ENCODE measurements at regions of chr2 and their contacts with region 1.

Region 1: DNA sequence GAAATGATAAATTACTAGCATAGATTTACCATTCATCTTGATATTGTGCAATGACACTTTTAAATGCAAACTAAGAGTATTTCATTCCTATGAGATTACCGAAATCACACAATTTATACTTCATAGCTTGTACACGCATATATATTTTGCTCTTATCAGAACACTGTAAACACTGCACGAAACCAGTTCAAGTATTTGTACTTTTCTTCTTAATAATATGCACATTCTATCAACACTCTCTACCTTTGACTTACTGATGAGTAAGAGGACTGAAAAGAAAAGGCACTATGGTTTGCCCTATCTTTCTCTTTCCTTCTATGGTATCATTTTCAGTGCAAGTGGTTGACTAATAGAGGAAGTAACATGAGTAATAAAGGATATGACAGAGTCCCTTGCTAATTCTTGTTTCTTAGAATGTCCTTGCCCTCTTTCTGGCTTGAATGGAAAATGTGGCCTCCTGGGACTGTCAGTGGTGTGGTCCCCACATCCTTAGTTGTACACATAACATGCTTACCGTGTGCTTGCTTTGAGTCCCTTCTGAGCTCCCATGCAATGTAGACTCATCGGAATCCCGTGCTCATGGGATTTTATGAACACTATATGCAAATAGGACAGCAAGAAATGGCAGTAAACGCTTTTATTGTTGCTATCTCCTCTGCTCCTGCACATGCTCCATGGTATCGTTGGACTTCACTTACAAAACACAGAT is 363.5 kb upstream of the TNP1 start:
- DNase-seq: peak; percentile 56
- H3K4me3 Mint-ChIP-seq: no peak overlapping the region
- H3K27ac Mint-ChIP-seq: peak overlapping the region; percentile 86
- H3K4me1 Mint-ChIP-seq: peaks cover 42% of the 10 kb centered on the region
- H3K27me3 Mint-ChIP-seq: no peaks in the 10 kb centered on the region
- CTCF ChIP-seq: no peak

Region 2: GRCh38 chr2:217086038-217086522 is 137.3 kb before region 1 on chr2:
- CTCF ChIA-PET with region 1: no interaction called
- intact Hi-C with region 1: no loop called
- DNase-seq: no peak
- H3K4me3 Mint-ChIP-seq: no peak overlapping the region
- H3K27ac Mint-ChIP-seq: no peak overlapping the region
- H3K4me1 Mint-ChIP-seq: no peaks in the 10 kb centered on the region
- H3K27me3 Mint-ChIP-seq: no peaks in the 10 kb centered on the region
- CTCF ChIP-seq: no peak

Region 3: GRCh38 chr2:217105733-217106649 is 117.4 kb before region 1 on chr2:
- CTCF ChIA-PET with region 1: no interaction called
- intact Hi-C with region 1: loop called (anchors 5 kb)
- DNase-seq: peak; percentile 66
- H3K4me3 Mint-ChIP-seq: no peak overlapping the region
- H3K27ac Mint-ChIP-seq: peak overlapping the region; percentile 90
- H3K4me1 Mint-ChIP-seq: peaks cover 65% of the 10 kb centered on the region
- H3K27me3 Mint-ChIP-seq: no peaks in the 10 kb centered on the region
- CTCF ChIP-seq: no peak

Region 4: GRCh38 chr2:217186668-217187159 is 36.7 kb before region 1 on chr2:
- CTCF ChIA-PET with region 1: no interaction called
- intact Hi-C with region 1: no loop called
- DNase-seq: no peak
- H3K4me3 Mint-ChIP-seq: no peak overlapping the region
- H3K27ac Mint-ChIP-seq: no peak overlapping the region
- H3K4me1 Mint-ChIP-seq: no peaks in the 10 kb centered on the region
- H3K27me3 Mint-ChIP-seq: no peaks in the 10 kb centered on the region
- CTCF ChIP-seq: no peak

Region 5: GRCh38 chr2:217261452-217261851 is 38.1 kb after region 1 on chr2:
- CTCF ChIA-PET with region 1: no interaction called
- intact Hi-C with region 1: loop called (anchors 1 kb)
- DNase-seq: peak; percentile 58
- H3K4me3 Mint-ChIP-seq: peak overlapping the region; percentile 10
- H3K27ac Mint-ChIP-seq: peak overlapping the region; percentile 94
- H3K4me1 Mint-ChIP-seq: peaks cover 44% of the 10 kb centered on the region
- H3K27me3 Mint-ChIP-seq: no peaks in the 10 kb centered on the region
- CTCF ChIP-seq: no peak

Measured in Calu3 (cell line).